Caki2 (cell line): ENCODE measurements at regions of chr15 and their contacts with region 1.

Region 1: DNA sequence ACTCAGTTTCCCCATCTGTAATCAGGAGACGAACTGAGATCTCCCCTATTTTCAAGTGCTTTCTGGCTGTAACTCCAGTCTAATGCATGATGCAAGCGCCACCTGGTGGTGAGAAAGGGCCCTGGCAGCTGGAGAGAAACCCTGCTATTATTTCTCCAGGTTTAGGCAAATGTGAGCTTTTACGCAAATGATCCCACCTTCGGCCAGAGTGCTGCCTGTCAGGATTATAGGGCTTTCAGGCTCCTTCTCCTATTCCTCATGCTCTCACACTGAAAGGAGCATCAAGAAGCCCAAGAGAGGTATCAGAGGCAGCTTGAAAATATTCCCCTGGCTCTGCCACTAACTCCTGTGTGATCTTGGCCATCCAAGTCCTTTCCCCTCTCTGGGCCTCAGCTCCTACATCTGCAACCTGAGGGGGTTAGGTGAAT is 93.9 kb upstream of the RASGRF1 start:
- DNase-seq: peak; percentile 56

Region 2: DNA sequence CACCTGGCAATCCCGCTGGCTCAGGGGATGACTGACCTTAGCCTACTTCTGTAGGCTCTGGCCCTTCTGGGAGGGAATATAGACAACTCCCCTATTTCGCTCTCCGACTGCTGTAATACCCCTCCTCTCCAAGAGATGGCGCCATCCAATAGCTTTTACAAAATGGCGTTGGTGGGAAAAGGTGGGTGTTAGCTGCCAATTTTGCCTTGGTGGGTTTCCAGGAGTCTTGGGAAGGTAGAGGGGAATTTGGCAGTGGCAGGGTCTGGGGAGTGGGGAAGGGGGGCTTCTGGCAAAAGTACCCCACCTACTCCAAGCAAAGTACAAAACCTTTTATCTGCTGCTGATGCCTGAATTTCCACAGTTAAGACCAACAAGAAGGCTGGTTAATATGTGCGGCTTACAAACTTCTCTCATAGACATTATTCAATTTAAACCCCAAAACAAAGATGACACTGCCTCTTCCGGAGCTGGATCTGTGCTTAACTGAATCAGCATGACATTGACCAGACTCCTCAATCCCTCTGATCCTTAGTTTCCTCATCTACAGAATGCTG is 156.0 kb before region 1 on chr15:
- in situ Hi-C with region 1: loop called (anchors 25 kb)
- DNase-seq: peak; percentile 40

Region 3: DNA sequence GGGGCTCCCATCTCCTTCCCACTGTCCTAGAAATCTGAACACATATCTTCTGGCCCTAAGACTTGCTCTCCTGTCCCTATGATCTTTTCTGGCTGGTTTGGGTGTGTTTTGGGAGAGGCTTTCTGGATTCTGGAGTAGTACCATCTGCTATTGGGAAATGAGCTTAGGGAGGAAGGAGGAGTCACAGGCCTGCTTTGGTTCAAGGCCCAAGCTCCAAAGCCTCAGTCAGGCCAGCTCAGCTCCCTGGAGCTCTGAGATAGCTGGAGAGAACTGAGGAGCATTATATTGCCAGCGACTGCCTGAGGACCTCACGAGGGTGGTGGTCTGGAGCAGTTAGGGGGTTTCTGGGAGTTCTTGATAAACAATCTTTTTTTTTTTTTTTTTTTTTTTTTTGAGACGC is 112.6 kb before region 1 on chr15:
- in situ Hi-C with region 1: no loop called
- DNase-seq: no peak

Region 4: DNA sequence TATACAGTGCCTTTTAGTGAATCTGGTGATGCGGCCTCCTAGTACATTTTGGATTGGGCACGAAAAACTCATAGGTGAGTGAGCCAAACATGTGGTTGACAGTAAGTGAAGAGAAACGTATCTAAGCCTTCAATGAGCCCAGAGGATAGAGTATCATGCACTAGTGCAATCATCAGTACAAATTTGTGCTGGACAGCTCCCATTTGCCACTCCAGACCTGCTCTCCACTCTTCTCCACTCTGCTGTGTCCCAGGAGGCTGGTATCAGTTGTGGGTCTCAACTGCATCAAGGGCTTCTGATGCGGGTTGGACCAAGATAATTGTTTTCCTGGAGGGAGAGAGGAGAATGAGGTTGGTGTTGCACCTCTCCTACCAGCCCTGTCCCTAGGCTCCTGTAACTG is 84.8 kb before region 1 on chr15:
- in situ Hi-C with region 1: no loop called
- DNase-seq: no peak

Region 5: DNA sequence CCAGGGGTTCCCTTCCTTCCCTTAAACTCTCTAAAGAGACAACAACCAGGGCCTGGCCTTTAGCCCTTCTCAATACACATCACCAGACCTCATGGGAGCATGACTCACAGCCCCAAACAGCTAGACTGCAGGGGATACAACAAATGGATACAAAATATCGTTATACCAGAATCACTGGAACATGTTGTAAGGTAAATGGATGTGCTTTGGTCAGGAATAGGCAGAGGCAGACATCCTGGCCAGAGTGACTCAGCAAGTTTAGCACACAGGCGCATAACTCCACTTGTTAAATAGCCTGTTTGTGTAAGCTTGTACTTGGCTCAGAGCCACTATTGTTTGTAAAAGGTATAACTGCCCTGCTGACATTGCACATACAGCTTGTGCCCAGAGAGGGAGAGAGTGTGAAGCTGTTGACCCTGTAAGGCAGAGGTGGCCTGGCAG is 144.7 kb after region 1 on chr15:
- in situ Hi-C with region 1: no loop called
- DNase-seq: peak; percentile 12